Activated T-helper 1 cell treated with anti-CD3 and anti-CD28 coated beads, Interleukin-12 subunit alpha, Interleukin-12 subunit beta, Interleukin-2, Interleukin-4 antibody, amounts not matched to agents 30 ng/mL and 10 ng/mL and 1 ng/mL, durations not matched to agents 14 hours and 24 hours and 36 hours (primary cell): ENCODE measurements at regions of chr5 and their contacts with region 1.

Region 1: DNA sequence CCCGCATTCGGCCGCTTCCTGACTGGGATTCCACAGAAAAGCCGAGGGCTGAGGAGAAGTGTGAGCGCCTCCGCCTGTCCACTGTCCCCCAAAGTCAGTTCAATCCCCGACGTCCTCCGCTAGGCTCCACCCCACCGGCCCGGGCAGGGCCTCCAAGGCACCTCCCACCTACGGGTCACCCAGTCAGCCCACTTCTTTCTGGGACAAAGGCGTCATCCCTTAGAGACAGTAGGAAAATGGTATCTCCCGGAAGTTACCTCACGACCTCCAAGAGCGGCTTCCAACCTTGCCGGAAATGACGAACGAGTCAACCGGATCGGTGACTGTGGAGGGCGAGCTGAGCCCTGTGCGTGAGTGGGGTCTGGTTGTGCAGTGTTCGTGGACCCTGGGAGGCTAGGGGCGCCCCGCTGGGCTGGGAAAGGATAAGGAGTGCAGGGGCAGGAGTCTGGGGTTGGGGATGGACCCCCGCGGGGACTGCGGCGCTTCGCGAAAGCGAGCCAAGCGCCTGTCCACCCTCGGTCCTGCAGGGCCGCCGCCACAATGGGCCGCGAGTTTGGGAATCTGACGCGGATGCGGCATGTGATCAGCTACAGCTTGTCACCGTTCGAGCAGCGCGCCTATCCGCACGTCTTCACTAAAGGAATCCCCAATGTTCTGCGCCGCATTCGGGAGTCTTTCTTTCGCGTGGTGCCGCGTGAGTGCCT is at the starts of genes GDF9 and UQCRQ:
- DNase-seq: peak; percentile 93
- H3K4me3 Mint-ChIP-seq: peak within 1 kb of the TSS; percentile 95
- H3K27ac Mint-ChIP-seq: peak within 1 kb of the TSS; percentile 99
- H3K4me1 Mint-ChIP-seq: peaks cover 33% of the 10 kb centered on the region
- H3K27me3 Mint-ChIP-seq: no peaks in the 10 kb centered on the region
- total RNA-seq, gene GDF9: 0.32 and 0.57 TPM in 2 replicates
- total RNA-seq, gene UQCRQ: 410 and 425 TPM in 2 replicates

Region 2: DNA sequence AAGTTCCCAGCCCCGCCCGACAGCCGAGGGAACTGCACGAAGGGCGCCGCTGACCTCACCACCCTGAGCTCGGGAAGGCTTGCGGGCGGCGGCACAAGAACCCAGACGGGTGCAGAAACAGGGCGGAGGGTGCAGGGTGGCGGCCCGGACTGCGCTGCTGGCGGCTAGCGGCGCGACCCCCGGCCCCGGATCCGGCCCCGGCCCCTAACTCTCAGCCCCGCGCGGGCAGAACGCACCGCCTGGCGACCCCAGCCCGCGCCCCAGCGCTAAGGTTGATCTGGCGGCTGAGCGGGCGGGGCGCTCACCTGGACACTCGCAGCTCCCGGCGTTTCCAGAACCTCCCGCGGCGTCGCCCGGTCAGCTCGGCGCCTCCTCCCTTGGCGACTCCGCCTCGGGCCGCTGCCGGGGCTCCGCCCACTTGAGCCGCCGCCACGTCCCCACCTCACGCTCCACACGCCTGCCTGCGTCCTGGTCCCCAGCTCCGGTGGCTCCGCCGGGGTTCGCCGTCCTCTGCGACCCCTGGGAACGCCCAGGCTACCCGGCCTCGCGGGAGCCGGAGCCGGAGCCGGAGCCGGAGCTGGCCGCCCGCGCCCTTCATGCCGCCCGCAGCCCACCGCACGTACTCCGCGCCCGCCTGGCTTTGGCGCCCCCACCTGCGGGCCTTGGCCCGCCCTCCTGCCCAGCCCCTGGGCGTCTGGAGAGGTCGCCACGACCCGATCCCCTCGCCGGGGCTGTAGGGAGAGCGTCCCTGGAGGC is 638.8 kb before region 1 on chr5 and contains the start of gene P4HA2:
- intact Hi-C with region 1: loop called (anchors 5 kb)
- DNase-seq: peak; percentile 52
- H3K4me3 Mint-ChIP-seq: peak within 1 kb of the TSS; percentile 82
- H3K27ac Mint-ChIP-seq: no peak within 1 kb of the TSS
- H3K4me1 Mint-ChIP-seq: peaks cover 55% of the 10 kb centered on the region
- H3K27me3 Mint-ChIP-seq: peaks cover 14% of the 10 kb centered on the region
- total RNA-seq, gene P4HA2: 48.7 and 49.4 TPM in 2 replicates

Region 3: DNA sequence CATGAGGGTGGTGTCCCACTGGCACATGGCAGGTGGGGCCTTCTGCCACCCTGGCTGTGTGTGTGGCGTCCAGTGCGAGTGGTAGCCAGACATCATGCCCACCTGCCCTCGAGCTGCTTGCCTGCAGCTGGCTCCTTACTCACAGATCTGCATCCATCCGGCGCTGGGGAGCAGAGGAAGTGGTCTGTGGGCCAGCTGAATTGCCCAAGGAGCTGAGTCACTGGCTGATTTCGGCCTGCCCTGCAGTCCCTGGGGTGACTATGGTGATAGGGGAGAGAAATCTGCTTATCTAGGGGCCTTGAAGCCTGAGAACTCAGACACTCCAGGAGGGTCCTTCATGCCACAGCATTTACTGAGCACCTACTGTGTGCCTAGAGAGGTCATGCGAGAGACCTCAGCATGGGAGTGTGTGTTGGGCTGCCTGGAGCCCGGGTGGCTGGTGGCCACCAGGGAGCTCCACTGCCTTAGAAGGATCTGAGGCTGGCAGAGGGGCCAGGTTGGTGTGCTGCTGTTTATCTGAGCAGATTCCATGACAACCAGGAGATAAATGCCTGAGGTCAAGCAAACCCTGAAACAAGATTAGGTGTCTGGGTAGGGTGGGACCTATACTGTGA is 439.9 kb before region 1 on chr5:
- intact Hi-C with region 1: loop called (anchors 1 kb)
- DNase-seq: peak; percentile 67
- H3K4me3 Mint-ChIP-seq: peak overlapping the region; percentile 72
- H3K27ac Mint-ChIP-seq: peak overlapping the region; percentile 98
- H3K4me1 Mint-ChIP-seq: peaks cover 97% of the 10 kb centered on the region
- H3K27me3 Mint-ChIP-seq: no peaks in the 10 kb centered on the region

Region 4: DNA sequence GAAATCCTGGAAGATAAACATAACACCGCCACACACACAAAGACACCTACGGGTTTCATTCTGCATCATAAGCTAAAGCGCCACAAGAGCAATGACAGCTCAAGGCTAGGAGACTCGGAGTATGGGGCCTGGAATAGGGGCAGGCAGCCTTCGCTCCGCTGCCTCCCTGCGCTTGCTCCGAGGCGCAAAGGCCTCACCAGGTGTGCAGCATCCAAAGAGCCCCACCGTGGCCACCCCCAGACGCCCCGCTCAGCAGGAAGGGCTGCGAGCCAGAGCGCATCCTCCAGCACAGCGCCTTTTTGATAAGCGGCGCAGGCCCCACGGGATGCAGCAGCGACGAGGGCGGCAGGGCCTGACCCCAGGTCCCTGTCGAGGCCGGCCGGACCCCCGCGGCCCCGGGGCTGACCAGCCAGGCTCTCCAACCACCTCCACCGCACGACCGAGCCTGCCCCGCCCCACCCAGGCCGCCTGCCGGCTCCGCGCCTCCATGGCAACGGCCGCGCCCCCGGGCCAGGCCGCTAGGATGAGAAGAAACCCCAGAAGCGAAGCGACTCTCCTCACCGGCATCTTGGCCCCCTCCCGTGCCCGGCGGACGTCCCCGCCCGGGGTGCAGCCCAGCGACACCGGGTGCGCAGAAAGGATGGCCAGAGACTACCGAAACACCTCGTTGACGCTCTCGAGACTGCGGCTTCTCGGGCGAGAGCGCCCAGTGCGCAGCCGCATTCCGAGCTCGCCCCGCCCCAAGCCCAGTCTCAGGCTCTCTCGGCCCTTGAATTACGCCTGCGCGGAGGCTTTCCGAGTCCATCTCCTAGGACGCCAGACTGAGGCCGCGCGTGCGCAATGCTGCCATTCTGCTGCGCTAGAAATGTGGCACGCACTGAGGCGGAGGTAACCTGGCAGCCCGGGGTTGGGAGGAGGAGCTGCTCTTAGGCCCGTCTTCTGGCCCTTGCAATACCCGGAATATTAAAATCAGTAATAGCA is 129.4 kb before region 1 on chr5 and contains the start of gene KIF3A:
- intact Hi-C with region 1: loop called (anchors 1 kb)
- DNase-seq: peak; percentile 98
- H3K4me3 Mint-ChIP-seq: peak within 1 kb of the TSS; percentile 87
- H3K27ac Mint-ChIP-seq: peak within 1 kb of the TSS; percentile 93
- H3K4me1 Mint-ChIP-seq: peaks cover 55% of the 10 kb centered on the region
- H3K27me3 Mint-ChIP-seq: peaks cover 10% of the 10 kb centered on the region
- total RNA-seq, gene KIF3A: 58.5 and 66.9 TPM in 2 replicates

Region 5: DNA sequence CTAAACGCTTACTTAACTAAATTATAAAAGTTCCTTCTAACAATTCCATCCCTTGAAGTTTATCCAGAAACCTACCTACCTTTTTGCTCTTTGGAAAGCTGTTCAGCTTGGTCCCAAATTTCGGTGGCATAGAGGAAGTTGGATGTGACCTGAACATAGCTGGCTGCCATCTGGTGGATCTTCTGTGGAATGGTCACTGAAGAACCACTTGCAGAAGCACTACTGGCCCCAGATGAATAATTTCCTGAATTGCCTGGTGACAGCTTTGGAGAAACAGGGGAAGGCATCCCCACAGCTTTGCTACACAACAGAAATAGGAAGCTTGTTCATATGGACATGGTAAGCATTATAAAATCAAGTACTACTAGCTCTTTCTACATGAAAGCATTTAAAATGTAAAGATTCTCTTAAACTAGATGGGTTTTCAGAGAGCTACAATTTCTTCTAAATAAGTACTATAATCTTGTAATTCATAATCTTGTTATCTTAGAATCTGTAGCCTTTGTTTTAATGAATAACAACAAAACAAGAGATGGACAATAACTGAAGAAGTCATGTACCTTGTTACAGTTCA is 16.9 kb after region 1 on chr5:
- intact Hi-C with region 1: loop called (anchors 2 kb)
- DNase-seq: no peak
- H3K4me3 Mint-ChIP-seq: no peak overlapping the region
- H3K27ac Mint-ChIP-seq: peak overlapping the region; percentile 22
- H3K4me1 Mint-ChIP-seq: peaks cover 24% of the 10 kb centered on the region
- H3K27me3 Mint-ChIP-seq: no peaks in the 10 kb centered on the region

Region 6: GRCh38 chr5:133051580-133052332 is 185.3 kb after region 1 on chr5 and contains the start of gene HSPA4:
- intact Hi-C with region 1: loop called (anchors 1 kb)
- DNase-seq: peak; percentile 96
- H3K4me3 Mint-ChIP-seq: peak within 1 kb of the TSS; percentile 96
- H3K27ac Mint-ChIP-seq: peak within 1 kb of the TSS; percentile 100
- H3K4me1 Mint-ChIP-seq: peaks cover 46% of the 10 kb centered on the region
- H3K27me3 Mint-ChIP-seq: peaks cover 2% of the 10 kb centered on the region
- total RNA-seq, gene HSPA4: 244 and 247 TPM in 2 replicates

Region 7: GRCh38 chr5:133240425-133241091 is 374.1 kb after region 1 on chr5:
- intact Hi-C with region 1: no loop called
- DNase-seq: peak; percentile 4
- H3K4me3 Mint-ChIP-seq: no peak overlapping the region
- H3K27ac Mint-ChIP-seq: no peak overlapping the region
- H3K4me1 Mint-ChIP-seq: peaks cover 21% of the 10 kb centered on the region
- H3K27me3 Mint-ChIP-seq: peaks cover 3% of the 10 kb centered on the region